ENCODE measurements at regions of chr6 and their contacts with region 1.

Region 1: GRCh38 chr6:113936093-113936934 is 34.6 kb downstream of the HDAC2 start:
- DNase-seq: peak in 6 of 9 donors; percentile 3 to 48 (median 24)
- ATAC-seq: peak; percentile 83
- H3K4me3 ChIP-seq: no peak overlapping the region
- H3K4me3 Mint-ChIP-seq: no peak overlapping the region
- H3K27ac ChIP-seq: no peak overlapping the region
- H3K27ac Mint-ChIP-seq: peak overlapping the region in 1 of 9 donors; percentile 32
- H3K4me1 ChIP-seq: no peaks in the 10 kb centered on the region
- H3K4me1 Mint-ChIP-seq: no peaks in the 10 kb centered on the region
- H3K27me3 ChIP-seq: no peaks in the 10 kb centered on the region
- H3K27me3 Mint-ChIP-seq: no peaks in the 10 kb centered on the region

Region 2: DNA sequence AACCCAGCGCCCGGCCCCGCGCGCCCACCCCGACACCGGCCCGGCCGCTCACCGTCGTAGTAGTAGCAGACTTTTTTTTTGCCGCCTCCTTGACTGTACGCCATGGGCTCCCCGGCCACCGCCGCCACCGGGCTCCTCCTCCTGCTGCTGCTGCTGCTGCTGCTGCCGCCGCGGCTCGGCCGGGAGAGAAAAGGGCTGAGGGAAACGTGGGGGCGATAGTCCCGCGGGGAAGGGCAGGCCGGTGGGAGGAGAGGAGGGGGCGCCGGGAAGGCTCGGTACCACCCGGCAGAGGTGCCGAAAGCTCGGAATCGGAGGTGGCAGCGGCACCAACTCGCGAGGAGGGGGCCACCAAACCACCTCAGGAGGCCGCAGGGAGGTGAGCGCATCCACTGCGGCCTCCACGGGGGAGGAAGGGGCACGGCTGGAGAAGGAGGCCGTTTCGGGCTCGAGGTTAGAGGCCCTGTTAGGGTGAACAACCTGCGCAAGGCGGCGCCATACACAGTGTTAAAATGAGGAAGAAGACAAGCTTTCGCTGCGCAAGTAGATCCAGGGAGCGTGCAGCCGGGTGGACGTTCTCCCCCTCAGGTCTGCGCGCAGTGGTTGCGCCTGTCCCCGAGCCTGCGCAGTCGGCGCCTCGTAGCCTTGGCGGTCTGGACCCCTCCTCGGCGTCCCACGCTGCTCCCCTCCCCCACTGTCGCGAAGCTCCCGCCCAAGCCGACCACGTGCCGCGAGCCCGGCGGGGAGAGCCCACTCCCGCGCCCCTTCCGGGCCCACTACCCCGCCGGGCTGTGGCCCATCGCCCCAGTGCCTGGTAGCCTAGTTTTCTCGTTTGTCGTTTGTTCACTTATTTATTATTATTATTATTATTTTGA is 34.7 kb after region 1 on chr6 and contains the start of gene HDAC2:
- CTCF ChIA-PET with region 1: interaction called, 5 read pairs
- POLR2A ChIA-PET with region 1: no interaction called
- intact Hi-C with region 1: loop called (anchors 2 to 5 kb)
- DNase-seq: peak; percentile 77 to 91 (median 85)
- ATAC-seq: peak; percentile 90
- H3K4me3 ChIP-seq: peak within 1 kb of the TSS; percentile 96
- H3K4me3 Mint-ChIP-seq: peak within 1 kb of the TSS; percentile 91 to 99 (median 97)
- H3K27ac ChIP-seq: peak within 1 kb of the TSS; percentile 92
- H3K27ac Mint-ChIP-seq: peak within 1 kb of the TSS; percentile 86 to 99 (median 97)
- H3K4me1 ChIP-seq: peaks cover 15 to 18% of the 10 kb centered on the region in 2 donors
- H3K4me1 Mint-ChIP-seq: peaks cover 24 to 46% (median 39%) of the 10 kb centered on the region in 7 donors
- H3K27me3 ChIP-seq: no peaks in the 10 kb centered on the region
- H3K27me3 Mint-ChIP-seq: peaks cover 0 to 6% (median 0%) of the 10 kb centered on the region in 5 donors
- total RNA-seq, gene HDAC2: 46.6 to 72.0 (median 54.7) TPM